Common myeloid progenitor, CD34-positive (primary cell): ENCODE measurements at regions of chr6 and their contacts with region 1.

Region 1: DNA sequence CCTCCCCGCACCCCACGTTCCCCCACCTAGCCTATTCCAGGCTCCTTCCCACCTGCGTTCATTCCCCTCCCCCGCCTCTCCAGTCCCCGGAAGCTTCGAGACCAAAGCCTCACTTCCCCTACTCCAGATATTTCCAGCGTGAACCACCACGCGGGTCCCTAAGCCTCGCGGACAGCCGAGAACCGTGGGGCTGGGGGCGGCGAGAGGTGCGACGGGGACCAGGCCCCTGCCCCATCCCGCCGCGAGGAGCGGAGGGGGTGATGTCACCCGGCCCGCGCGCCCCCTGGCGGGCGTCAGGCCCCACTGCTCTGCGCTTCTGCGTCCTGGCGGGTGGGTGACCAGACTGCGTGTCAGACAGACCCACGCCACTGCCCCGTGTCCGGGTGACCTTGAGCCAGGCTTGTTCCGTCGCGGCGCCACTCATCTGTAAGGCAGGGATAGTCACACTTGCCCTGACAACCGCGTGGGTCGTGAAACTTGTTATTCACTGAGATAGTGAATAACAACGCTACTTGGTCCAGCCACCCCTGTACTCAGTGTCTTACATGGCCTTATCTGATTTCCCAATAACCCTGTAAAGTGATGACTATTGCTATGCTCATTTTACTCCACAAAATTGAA is 9.0 kb upstream of the HSP90AB1 start:
- DNase-seq: peak; percentile 64 to 87 (median 84)
- H3K4me3 ChIP-seq: peak overlapping the region; percentile 39 to 82 (median 64)
- H3K27ac ChIP-seq: peak overlapping the region in 1 of 2 experiments; percentile 86
- H3K4me1 ChIP-seq: peaks cover 0 to 38% (median 32%) of the 10 kb centered on the region in 4 experiments
- H3K27me3 ChIP-seq: no peaks in the 10 kb centered on the region

Region 2: DNA sequence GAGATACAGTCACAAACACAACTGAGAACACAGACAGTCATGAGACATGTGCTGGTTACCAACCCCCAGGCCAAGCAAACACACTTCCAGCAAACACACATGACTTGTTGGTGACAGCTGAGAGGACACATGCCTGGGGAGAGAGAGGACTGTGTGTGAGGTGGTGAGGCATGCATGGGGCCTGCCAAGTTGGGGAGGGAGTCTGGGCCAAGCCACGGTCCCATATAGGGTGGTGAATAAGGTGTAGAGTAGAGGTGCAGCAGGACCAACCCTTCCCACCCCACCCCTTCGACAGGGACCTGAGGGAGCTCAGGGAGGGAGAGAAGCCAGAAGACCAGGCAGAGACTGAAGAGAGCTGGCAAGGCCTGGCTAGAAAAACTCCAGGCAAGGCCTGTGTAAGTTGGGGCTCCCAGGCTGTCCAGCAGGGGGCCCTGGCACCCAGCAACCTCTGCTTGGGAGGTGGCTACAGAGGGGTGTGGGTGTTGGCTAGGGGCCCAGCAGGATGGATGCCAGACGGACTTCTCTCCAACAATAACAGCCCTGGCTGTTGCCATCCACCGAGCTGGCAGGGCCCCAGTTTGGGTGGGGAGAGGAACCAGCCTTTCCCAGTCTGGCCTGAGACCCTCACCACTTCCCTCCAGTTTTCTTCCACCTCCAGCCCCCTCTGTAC is 16.5 kb before region 1 on chr6:
- CTCF ChIA-PET with region 1: interaction called, 96 read pairs
- POLR2A ChIA-PET with region 1: interaction called, 5 read pairs
- DNase-seq: peak; percentile 89 to 93 (median 93)
- H3K4me3 ChIP-seq: peak overlapping the region in 2 of 7 experiments; percentile 11
- H3K27ac ChIP-seq: no peak overlapping the region
- H3K4me1 ChIP-seq: peaks cover 0 to 89% (median 83%) of the 10 kb centered on the region in 4 experiments
- H3K27me3 ChIP-seq: no peaks in the 10 kb centered on the region

Region 3: GRCh38 chr6:44251576-44252524 is 13.9 kb after region 1 on chr6:
- CTCF ChIA-PET with region 1: interaction called, 35 read pairs
- POLR2A ChIA-PET with region 1: interaction called, 14 read pairs
- DNase-seq: no peak
- H3K4me3 ChIP-seq: no peak overlapping the region
- H3K27ac ChIP-seq: no peak overlapping the region
- H3K4me1 ChIP-seq: peaks cover 17 to 53% (median 42%) of the 10 kb centered on the region in 4 experiments
- H3K27me3 ChIP-seq: no peaks in the 10 kb centered on the region

Region 4: DNA sequence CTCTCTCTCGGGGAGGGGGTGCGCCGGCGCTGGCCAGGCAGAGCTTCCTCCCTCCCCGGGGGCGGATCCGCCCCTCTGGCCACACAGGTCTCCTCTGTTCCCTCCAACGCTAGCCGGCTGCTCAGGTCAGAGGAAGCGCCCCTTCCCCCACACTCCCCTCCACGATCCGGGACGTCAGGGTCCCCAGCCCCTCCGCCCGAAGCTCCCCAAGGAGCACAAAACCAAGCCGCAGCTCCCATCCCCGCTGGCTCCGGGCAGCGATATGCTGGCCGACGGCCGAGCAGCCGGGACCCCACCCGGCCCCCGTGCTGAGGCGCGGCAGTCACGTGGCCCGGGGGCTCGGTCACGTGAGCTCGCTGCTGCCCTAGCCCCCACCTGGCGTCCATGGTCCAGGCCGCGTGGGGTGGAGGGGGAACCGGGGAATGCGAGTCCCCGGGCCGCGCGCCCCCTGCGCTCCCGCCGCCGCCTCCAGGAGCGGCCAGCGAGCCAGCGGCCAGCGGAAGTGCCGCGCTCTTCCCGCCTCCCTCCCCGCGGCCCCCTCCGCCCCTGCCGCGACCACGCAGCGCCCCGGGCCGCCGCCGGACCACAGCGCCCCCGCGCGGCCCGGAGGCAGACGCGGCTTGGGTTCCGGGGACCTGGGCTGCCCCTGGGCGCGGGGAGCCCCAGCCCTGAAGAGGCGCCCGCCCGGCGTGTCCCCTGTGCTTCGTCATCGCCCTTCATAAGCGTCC is 19.3 kb after region 1 on chr6 and contains the start of gene SLC35B2:
- CTCF ChIA-PET with region 1: interaction called, 35 read pairs
- POLR2A ChIA-PET with region 1: interaction called, 4 read pairs
- DNase-seq: peak; percentile 50 to 77 (median 69)
- H3K4me3 ChIP-seq: peak within 1 kb of the TSS; percentile 63 to 89 (median 83)
- H3K27ac ChIP-seq: peak within 1 kb of the TSS; percentile 46 to 73
- H3K4me1 ChIP-seq: peaks cover 4 to 42% (median 29%) of the 10 kb centered on the region in 4 experiments
- H3K27me3 ChIP-seq: no peaks in the 10 kb centered on the region